ENCODE measurements at regions of chr18 and their contacts with region 1.

Region 1: GRCh38 chr18:49135877-49136276 is 185.1 kb upstream of the SMAD7 start:
- DNase-seq: no peak
- ATAC-seq: no peak
- H3K4me3 ChIP-seq: no peak overlapping the region
- H3K4me3 Mint-ChIP-seq: no peak overlapping the region
- H3K27ac ChIP-seq: no peak overlapping the region
- H3K27ac Mint-ChIP-seq: no peak overlapping the region
- H3K4me1 ChIP-seq: no peaks in the 10 kb centered on the region
- H3K4me1 Mint-ChIP-seq: no peaks in the 10 kb centered on the region
- H3K27me3 ChIP-seq: no peaks in the 10 kb centered on the region
- H3K27me3 Mint-ChIP-seq: no peaks in the 10 kb centered on the region
- CTCF ChIP-seq: no peak

Region 2: GRCh38 chr18:48997985-48998831 is 137.7 kb before region 1 on chr18:
- CTCF ChIA-PET with region 1: no interaction called
- POLR2A ChIA-PET with region 1: no interaction called
- intact Hi-C with region 1: no loop called
- DNase-seq: no peak
- ATAC-seq: no peak
- H3K4me3 ChIP-seq: no peak overlapping the region
- H3K4me3 Mint-ChIP-seq: no peak overlapping the region
- H3K27ac ChIP-seq: no peak overlapping the region
- H3K27ac Mint-ChIP-seq: no peak overlapping the region
- H3K4me1 ChIP-seq: peaks cover 12% of the 10 kb centered on the region
- H3K4me1 Mint-ChIP-seq: peaks cover 15% of the 10 kb centered on the region
- H3K27me3 ChIP-seq: no peaks in the 10 kb centered on the region
- H3K27me3 Mint-ChIP-seq: peaks cover 2% of the 10 kb centered on the region
- CTCF ChIP-seq: no peak

Region 3: DNA sequence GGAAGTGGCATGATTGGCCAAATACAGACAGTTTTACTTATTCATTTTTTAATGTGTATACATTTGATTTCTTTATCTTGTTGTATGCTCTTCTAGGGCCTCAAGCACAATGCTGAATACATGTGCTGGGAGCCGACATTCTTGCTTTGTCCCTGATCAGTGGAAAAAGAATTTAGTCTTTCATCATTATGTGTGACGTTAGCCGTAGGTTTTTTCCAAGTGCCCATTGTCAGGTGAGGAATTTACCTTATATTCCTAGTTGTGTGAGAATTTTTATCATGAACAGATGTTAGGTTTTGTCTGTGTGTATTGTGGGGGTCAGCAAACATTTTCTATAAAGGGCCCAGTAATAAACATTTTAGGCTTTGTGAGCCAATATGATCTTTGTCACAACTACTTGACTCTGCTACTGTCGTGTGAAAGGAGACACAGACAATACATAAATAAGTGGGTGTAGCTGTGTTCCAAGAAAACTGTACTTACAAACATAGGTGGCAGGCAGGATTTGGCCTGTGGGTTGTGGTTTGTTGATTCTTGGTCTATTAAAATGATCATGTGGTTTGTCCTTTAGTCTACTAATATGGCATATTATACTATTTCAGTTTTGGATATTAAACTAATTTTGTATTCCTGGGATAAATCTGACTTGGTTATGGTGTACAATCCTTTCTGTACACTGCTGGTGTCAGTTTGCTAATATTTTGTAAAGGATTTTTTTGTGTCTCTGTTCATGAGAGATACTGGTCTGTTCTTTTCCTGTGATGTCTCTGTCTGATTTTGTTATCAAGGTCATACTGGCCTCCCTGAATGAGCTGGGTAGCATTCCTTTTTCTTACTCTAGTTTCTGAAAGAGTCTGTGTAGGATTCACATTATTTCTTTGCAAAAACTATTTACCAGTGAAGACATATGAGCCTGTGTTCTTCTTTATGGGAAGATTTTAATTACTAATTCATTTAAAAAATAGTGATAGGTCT is 52.9 kb before region 1 on chr18:
- CTCF ChIA-PET with region 1: no interaction called
- POLR2A ChIA-PET with region 1: no interaction called
- intact Hi-C with region 1: no loop called
- DNase-seq: no peak
- ATAC-seq: no peak
- H3K4me3 ChIP-seq: no peak overlapping the region
- H3K4me3 Mint-ChIP-seq: no peak overlapping the region
- H3K27ac ChIP-seq: no peak overlapping the region
- H3K27ac Mint-ChIP-seq: no peak overlapping the region
- H3K4me1 ChIP-seq: no peaks in the 10 kb centered on the region
- H3K4me1 Mint-ChIP-seq: peaks cover 9% of the 10 kb centered on the region
- H3K27me3 ChIP-seq: no peaks in the 10 kb centered on the region
- H3K27me3 Mint-ChIP-seq: no peaks in the 10 kb centered on the region
- CTCF ChIP-seq: no peak

Region 4: GRCh38 chr18:49100226-49100968 is 35.5 kb before region 1 on chr18:
- CTCF ChIA-PET with region 1: no interaction called
- POLR2A ChIA-PET with region 1: no interaction called
- intact Hi-C with region 1: no loop called
- DNase-seq: no peak
- ATAC-seq: no peak
- H3K4me3 ChIP-seq: no peak overlapping the region
- H3K4me3 Mint-ChIP-seq: no peak overlapping the region
- H3K27ac ChIP-seq: no peak overlapping the region
- H3K27ac Mint-ChIP-seq: peak overlapping the region; percentile 49
- H3K4me1 ChIP-seq: no peaks in the 10 kb centered on the region
- H3K4me1 Mint-ChIP-seq: no peaks in the 10 kb centered on the region
- H3K27me3 ChIP-seq: no peaks in the 10 kb centered on the region
- H3K27me3 Mint-ChIP-seq: no peaks in the 10 kb centered on the region
- CTCF ChIP-seq: no peak

Region 5: GRCh38 chr18:49189772-49190171 is 53.9 kb after region 1 on chr18:
- CTCF ChIA-PET with region 1: no interaction called
- POLR2A ChIA-PET with region 1: no interaction called
- intact Hi-C with region 1: no loop called
- DNase-seq: no peak
- ATAC-seq: no peak
- H3K4me3 ChIP-seq: no peak overlapping the region
- H3K4me3 Mint-ChIP-seq: no peak overlapping the region
- H3K27ac ChIP-seq: no peak overlapping the region
- H3K27ac Mint-ChIP-seq: no peak overlapping the region
- H3K4me1 ChIP-seq: no peaks in the 10 kb centered on the region
- H3K4me1 Mint-ChIP-seq: peaks cover 1% of the 10 kb centered on the region
- H3K27me3 ChIP-seq: no peaks in the 10 kb centered on the region
- H3K27me3 Mint-ChIP-seq: no peaks in the 10 kb centered on the region
- CTCF ChIP-seq: no peak

Region 6: DNA sequence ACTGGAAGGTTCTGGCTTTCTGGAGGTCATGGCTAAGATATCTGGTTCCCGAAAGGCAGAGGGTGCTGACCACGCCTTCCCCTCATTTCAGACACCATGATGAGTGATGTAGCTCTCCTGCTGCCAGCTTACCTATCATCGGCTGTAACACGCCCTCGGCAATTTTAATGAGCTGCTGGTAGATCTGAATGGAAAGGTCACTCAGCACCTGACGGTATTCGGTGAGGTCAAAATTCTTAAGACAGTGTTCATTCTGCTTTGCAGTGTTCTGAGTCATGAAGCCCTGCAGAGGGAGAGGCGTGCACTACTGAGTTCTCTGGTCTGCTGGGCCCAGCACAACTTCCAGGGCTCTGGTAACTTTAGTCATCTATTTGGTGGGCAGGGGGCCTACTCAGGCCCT is 703.1 kb after region 1 on chr18:
- CTCF ChIA-PET with region 1: no interaction called
- POLR2A ChIA-PET with region 1: no interaction called
- intact Hi-C with region 1: loop called in 1 of 2 experiments (anchors 5 kb)
- DNase-seq: no peak
- ATAC-seq: no peak
- H3K4me3 ChIP-seq: no peak overlapping the region
- H3K4me3 Mint-ChIP-seq: no peak overlapping the region
- H3K27ac ChIP-seq: no peak overlapping the region
- H3K27ac Mint-ChIP-seq: no peak overlapping the region
- H3K4me1 ChIP-seq: no peaks in the 10 kb centered on the region
- H3K4me1 Mint-ChIP-seq: no peaks in the 10 kb centered on the region
- H3K27me3 ChIP-seq: no peaks in the 10 kb centered on the region
- H3K27me3 Mint-ChIP-seq: no peaks in the 10 kb centered on the region
- CTCF ChIP-seq: no peak